Right cardiac atrium (tissue), 5 donors: ENCODE measurements at regions of chrX and their contacts with region 1.

Region 1: GRCh38 chrX:152632445-152633097 is 5.1 kb upstream of the GABRQ start:
- DNase-seq: peak in 2 of 3 donors; percentile 28 to 54
- ATAC-seq: no peak
- H3K4me3 ChIP-seq: no peak overlapping the region
- H3K27ac ChIP-seq: no peak overlapping the region
- H3K4me1 ChIP-seq: no peaks in the 10 kb centered on the region
- H3K27me3 ChIP-seq: no peaks in the 10 kb centered on the region

Region 2: GRCh38 chrX:151745651-151746050 is 886.9 kb before region 1 on chrX:
- intact Hi-C with region 1: loop called in 3 of 4 experiments (anchors 5 kb)
- DNase-seq: no peak
- ATAC-seq: no peak
- H3K4me3 ChIP-seq: no peak overlapping the region
- H3K27ac ChIP-seq: no peak overlapping the region
- H3K4me1 ChIP-seq: no peaks in the 10 kb centered on the region
- H3K27me3 ChIP-seq: no peaks in the 10 kb centered on the region

Region 3: GRCh38 chrX:151753313-151754041 is 879.1 kb before region 1 on chrX:
- intact Hi-C with region 1: loop called (anchors 2 to 5 kb)
- DNase-seq: peak; percentile 49 to 79 (median 78)
- ATAC-seq: peak; percentile 88 to 90
- H3K4me3 ChIP-seq: no peak overlapping the region
- H3K27ac ChIP-seq: no peak overlapping the region
- H3K4me1 ChIP-seq: no peaks in the 10 kb centered on the region
- H3K27me3 ChIP-seq: no peaks in the 10 kb centered on the region

Region 4: GRCh38 chrX:152037183-152037582 is 595.4 kb before region 1 on chrX:
- intact Hi-C with region 1: no loop called
- DNase-seq: no peak
- ATAC-seq: no peak
- H3K4me3 ChIP-seq: no peak overlapping the region
- H3K27ac ChIP-seq: no peak overlapping the region
- H3K4me1 ChIP-seq: no peaks in the 10 kb centered on the region
- H3K27me3 ChIP-seq: no peaks in the 10 kb centered on the region

Region 5: GRCh38 chrX:152798945-152799344 is 166.4 kb after region 1 on chrX:
- intact Hi-C with region 1: no loop called
- DNase-seq: no peak
- ATAC-seq: no peak
- H3K4me3 ChIP-seq: no peak overlapping the region
- H3K27ac ChIP-seq: no peak overlapping the region
- H3K4me1 ChIP-seq: no peaks in the 10 kb centered on the region
- H3K27me3 ChIP-seq: no peaks in the 10 kb centered on the region

Region 6: DNA sequence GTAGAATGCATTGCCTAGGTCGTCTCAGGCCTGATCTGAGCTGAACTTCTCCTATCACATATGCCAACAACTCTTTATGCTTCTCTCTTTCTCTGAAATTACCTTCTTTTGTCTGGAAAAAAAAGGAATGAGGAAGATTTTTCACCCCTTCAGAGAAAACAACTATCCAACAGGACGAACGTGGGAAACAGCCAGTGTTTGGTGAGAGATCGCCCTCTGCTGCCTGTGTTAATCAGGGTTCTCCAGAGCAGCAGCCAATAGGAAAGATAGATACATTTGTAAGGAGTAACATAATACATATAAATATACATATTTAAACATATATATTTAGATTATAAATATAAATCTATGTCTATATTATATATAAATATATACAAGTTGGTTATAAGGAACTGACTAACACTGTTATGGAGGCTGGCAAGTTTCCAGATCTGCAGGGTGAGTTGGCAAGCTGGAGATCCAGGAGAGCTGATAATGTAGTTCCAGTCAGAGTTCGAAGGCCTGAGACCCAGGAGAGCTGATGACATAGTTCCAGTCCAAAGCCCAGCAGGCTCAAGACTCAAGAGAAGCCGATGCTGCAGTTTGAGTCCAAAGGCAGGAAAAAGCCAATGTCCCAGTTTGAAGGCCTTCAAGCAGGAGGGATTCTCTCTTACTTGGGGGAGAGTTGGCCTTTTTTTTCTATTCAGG is 184.7 kb after region 1 on chrX:
- intact Hi-C with region 1: loop called in 1 of 4 experiments (anchors 5 kb)
- DNase-seq: no peak
- ATAC-seq: no peak
- H3K4me3 ChIP-seq: no peak overlapping the region
- H3K27ac ChIP-seq: no peak overlapping the region
- H3K4me1 ChIP-seq: no peaks in the 10 kb centered on the region
- H3K27me3 ChIP-seq: no peaks in the 10 kb centered on the region

Region 7: GRCh38 chrX:153947009-153947769 is 1314.6 kb after region 1 on chrX:
- intact Hi-C with region 1: no loop called
- DNase-seq: peak; percentile 71 to 90 (median 87)
- ATAC-seq: peak; percentile 60 to 63
- H3K4me3 ChIP-seq: no peak overlapping the region
- H3K27ac ChIP-seq: peak overlapping the region; percentile 14
- H3K4me1 ChIP-seq: no peaks in the 10 kb centered on the region
- H3K27me3 ChIP-seq: no peaks in the 10 kb centered on the region